ENCODE measurements at regions of chr2 and their contacts with region 1.

Region 1: DNA sequence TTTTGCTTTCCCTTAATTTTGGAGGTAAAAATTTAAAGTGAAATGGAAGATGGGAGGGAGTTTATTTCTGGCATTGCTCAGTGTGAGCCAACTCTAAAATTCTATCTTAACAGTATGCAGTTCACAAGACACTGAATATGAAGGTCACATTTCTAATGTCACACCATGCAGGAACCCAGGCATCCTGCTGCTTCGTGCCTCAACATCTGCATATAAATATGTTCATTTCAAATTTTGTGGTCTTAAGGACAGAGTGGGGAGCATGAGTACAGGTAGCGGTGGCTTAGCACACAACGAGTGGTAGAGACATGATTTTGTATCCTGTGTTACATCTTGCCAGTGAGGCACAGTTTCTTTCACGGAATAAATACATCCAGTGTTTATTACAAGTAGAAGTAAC is 102.4 kb downstream of the ARL4C start:
- DNase-seq: no peak
- H3K4me3 Mint-ChIP-seq: no peak overlapping the region
- H3K27ac Mint-ChIP-seq: no peak overlapping the region
- H3K4me1 Mint-ChIP-seq: peaks cover 47% of the 10 kb centered on the region
- H3K27me3 Mint-ChIP-seq: no peaks in the 10 kb centered on the region

Region 2: GRCh38 chr2:234406085-234406484 is 11.6 kb after region 1 on chr2:
- intact Hi-C with region 1: loop called (anchors 1 kb)
- DNase-seq: no peak
- H3K4me3 Mint-ChIP-seq: no peak overlapping the region
- H3K27ac Mint-ChIP-seq: no peak overlapping the region
- H3K4me1 Mint-ChIP-seq: peaks cover 59% of the 10 kb centered on the region
- H3K27me3 Mint-ChIP-seq: no peaks in the 10 kb centered on the region

Measured in activated T-helper 1 cell treated with anti-CD3 and anti-CD28 coated beads, Interleukin-12 subunit alpha, Interleukin-12 subunit beta, Interleukin-2, Interleukin-4 antibody, amounts not matched to agents 30 ng/mL and 10 ng/mL and 1 ng/mL, durations not matched to agents 14 hours and 24 hours and 36 hours (primary cell).